ENCODE measurements at regions of chr1 and their contacts with region 1.

Region 1: DNA sequence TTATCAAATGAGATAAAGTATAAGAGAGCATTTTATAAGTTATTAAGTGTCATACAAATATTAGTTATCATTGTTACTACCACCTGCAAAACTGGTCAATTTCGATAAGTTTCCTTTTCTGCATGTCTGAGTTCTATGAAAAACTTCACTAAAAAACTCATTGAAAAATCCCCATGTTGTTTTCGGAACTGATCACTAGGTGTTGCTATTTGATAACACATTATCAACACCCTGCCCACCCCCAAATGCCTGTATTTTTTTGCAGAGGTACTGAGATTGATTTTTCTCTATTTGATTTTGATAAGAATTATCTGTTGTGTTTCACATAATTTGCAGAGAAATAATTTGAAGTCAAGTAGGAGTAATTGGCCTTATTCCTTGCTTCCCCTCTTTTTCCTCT is 22.1 kb upstream of the DISP1 start:
- DNase-seq: no peak

Region 2: GRCh38 chr1:222777977-222778376 is 14.8 kb before region 1 on chr1:
- intact Hi-C with region 1: no loop called
- DNase-seq: no peak

Region 3: DNA sequence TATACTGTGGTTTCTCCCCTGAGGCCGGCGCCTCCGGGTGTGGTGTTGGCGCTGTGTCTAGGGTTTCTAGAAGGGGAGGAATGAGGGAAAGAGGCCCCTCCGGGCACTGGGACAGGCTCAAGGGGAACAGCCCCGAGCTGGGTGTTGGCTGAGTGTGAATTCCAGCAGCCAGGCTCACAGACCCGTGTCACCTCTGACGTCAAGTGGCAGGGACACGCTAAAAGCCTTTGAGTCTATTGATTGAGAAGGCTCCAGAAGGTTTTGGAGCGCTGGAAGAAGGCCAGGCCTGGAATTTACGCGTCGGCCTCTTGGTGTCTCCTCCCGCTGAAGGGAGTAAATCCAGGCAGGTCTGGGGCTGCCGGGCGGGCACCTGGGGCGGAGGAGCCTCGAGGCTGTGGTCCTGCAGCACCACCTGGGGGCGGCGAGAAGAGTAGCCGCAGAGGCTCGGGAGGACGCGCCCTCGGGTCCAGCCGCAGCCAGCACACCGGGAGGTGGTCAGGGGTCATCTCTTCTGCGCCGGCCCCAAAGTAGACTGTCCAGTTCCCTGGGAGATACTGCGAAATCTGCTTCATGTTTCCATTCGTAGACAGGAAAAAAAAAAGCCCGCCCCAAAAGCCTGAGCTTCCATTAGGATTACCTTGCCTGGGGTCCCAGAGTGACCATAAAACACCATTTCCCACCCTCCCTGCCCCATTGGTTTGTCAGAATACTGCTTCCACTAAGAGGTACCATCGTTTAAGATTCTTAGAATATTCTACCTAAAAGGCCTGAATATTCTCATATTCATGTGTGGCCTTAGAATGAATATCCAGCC is 288.6 kb after region 1 on chr1:
- intact Hi-C with region 1: loop called (anchors 5 kb)
- DNase-seq: peak; percentile 95

Region 4: DNA sequence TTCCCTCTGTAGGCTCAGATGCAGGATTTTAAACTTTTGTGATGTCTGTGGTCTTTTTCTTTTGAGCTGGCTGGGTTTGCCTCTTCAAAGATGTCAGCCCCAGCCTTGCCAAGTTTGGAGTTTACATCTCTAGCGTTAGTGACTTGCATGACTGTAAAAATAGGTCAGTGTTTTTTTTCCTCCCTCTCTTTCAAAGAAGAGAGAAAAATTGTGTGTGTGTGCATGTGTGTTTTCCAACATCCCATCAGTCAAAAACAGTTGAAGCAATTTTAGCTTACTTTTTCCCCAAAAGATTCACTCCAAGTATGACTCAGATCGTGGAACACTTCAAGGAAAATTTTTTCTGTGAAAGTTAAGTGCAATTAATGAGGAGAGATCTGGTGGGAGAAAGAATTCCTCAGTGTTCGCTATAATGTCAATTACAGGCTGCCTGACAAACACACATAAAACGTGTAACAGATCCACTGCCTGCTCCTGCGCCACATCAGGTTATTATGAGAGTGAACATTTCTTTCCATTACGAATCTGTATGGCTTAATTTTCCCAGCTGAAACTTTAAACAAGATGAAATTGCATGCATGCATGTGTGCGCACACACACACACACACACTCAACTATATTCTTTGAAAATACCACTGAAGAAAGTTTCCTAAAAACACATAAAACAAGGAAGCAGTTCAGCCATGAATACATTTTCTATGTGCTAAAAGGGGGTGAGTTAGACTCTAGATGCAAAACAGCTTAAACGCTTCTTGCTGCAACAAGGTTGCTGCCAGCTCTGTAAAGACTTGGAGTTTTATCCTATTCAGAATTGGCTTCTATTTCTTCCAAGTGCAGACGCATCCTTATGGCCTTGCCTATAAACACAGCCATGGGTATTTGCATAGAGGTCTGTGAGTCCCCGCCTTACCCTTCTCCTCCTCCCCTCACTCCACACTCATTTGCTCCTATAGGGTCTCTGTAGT is 294.8 kb after region 1 on chr1:
- intact Hi-C with region 1: loop called (anchors 5 kb)
- DNase-seq: no peak

Region 5: GRCh38 chr1:223695941-223696340 is 903.2 kb after region 1 on chr1:
- intact Hi-C with region 1: loop called in 1 of 2 experiments (anchors 10 kb)
- DNase-seq: no peak